ENCODE measurements at regions of chr15 and their contacts with region 1.

Region 1: GRCh38 chr15:70474471-70475396 is 288.6 kb downstream of the UACA start:
- DNase-seq: peak; percentile 97
- H3K4me3 ChIP-seq: peak overlapping the region; percentile 47
- H3K27ac ChIP-seq: peak overlapping the region; percentile 89
- H3K4me1 ChIP-seq: peaks cover 27% of the 10 kb centered on the region
- H3K27me3 ChIP-seq: no peaks in the 10 kb centered on the region

Region 2: GRCh38 chr15:69735121-69735520 is 739.6 kb before region 1 on chr15:
- in situ Hi-C with region 1: loop called (anchors 10 kb)
- DNase-seq: peak; percentile 75
- H3K4me3 ChIP-seq: 0 out of 2 replicates have a peak overlapping the region, but pooled peaks have one; percentile 10
- H3K27ac ChIP-seq: peak overlapping the region; percentile 28; the same call in 1 of the 2 replicates
- H3K4me1 ChIP-seq: no peaks in the 10 kb centered on the region; the same call in 1 of the 2 replicates
- H3K27me3 ChIP-seq: peaks cover 23% of the 10 kb centered on the region; the same call in 1 of the 2 replicates